Activated CD4-positive, alpha-beta memory T cell treated with anti-CD3 and anti-CD28 coated beads for 36 hours (primary cell): ENCODE measurements at regions of chr1 and their contacts with region 1.

Region 1: DNA sequence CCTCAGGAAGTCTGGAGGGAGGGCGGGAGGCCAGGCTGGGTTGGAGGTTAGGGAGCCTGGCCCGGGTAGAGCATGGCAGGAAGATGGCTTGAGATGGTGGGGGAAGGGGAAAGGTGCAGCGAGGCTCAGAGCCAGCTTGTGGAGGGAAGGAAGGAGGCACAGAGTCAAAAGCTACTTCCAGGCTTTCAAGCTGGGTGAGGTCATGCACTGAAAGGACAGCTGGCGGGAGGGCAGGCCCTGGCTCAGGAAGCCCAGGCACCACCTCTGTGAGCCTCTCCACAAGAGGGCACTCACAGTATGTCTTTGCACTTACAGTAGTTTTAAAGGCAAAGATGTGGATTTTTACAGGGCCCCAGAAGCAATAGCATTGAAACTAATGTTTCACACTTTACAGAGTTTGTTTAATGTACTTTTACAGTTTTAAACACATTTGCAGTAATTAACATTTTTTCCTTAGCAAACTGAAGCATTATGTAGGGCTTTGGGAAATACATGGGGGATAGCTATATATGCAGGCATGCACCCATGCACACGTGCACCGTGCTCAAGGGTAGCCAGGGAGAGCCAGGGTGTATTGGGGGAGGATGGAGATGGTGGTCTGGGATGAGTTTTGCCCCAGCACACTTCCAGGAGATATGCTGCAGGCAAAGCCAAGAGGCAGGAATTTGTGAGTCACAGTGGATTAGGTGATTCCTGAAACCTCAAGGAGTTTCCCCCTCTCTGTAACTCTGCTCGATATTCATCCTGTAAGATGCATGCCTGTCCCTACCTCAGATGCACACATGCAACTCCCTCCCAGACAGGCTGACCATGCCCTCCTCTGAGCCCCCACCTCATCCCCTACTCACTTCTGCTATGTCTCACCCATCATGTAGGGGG is 6.1 kb upstream of the ADAM15 start:
- DNase-seq: peak; percentile 76
- H3K4me3 Mint-ChIP-seq: no peak overlapping the region
- H3K27ac Mint-ChIP-seq: no peak overlapping the region
- H3K4me1 Mint-ChIP-seq: peaks cover 8% of the 10 kb centered on the region
- H3K27me3 Mint-ChIP-seq: no peaks in the 10 kb centered on the region

Region 2: DNA sequence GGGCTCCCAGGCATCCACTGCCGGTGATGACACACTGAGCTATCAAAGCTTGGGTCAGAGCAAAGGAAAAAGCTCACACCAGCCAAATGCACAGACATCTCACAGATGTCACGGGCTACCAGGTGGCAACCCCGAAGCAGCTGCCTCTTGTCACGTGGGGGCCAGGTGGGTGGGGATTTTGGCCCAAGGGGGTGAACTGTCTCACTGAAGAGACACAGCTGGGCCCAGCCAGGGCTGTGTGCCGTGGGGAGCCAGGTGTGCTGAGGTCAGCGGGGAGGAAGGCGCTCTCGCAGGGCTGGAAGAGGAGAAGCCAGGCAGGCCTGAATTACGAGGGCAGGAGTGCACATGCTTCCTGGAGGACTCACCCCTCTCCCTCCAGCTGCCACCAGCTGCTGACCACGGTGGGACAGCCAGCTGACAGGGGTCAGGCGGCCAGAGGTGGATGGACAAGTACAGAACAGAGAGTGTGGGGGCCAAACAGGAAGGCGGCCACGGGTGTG is 207.3 kb before region 1 on chr1:
- CTCF ChIA-PET with region 1: no interaction called
- POLR2A ChIA-PET with region 1: no interaction called
- intact Hi-C with region 1: no loop called
- DNase-seq: no peak
- H3K4me3 Mint-ChIP-seq: no peak overlapping the region
- H3K27ac Mint-ChIP-seq: no peak overlapping the region
- H3K4me1 Mint-ChIP-seq: no peaks in the 10 kb centered on the region
- H3K27me3 Mint-ChIP-seq: peaks cover 1% of the 10 kb centered on the region

Region 3: GRCh38 chr1:154936555-154937084 is 108.4 kb before region 1 on chr1 and contains the start of gene PMVK:
- CTCF ChIA-PET with region 1: no interaction called
- POLR2A ChIA-PET with region 1: no interaction called
- intact Hi-C with region 1: no loop called
- DNase-seq: peak; percentile 96
- H3K4me3 Mint-ChIP-seq: peak within 1 kb of the TSS; percentile 90
- H3K27ac Mint-ChIP-seq: peak within 1 kb of the TSS; percentile 96
- H3K4me1 Mint-ChIP-seq: peaks cover 55% of the 10 kb centered on the region
- H3K27me3 Mint-ChIP-seq: no peaks in the 10 kb centered on the region
- total RNA-seq, gene PMVK: 51.2 to 54.0 TPM

Region 4: GRCh38 chr1:155022927-155023236 is 22.2 kb before region 1 on chr1:
- CTCF ChIA-PET with region 1: interaction called, 14 read pairs
- POLR2A ChIA-PET with region 1: interaction called, 3 read pairs
- intact Hi-C with region 1: no loop called
- DNase-seq: no peak
- H3K4me3 Mint-ChIP-seq: no peak overlapping the region
- H3K27ac Mint-ChIP-seq: no peak overlapping the region
- H3K4me1 Mint-ChIP-seq: peaks cover 21% of the 10 kb centered on the region
- H3K27me3 Mint-ChIP-seq: no peaks in the 10 kb centered on the region

Region 5: DNA sequence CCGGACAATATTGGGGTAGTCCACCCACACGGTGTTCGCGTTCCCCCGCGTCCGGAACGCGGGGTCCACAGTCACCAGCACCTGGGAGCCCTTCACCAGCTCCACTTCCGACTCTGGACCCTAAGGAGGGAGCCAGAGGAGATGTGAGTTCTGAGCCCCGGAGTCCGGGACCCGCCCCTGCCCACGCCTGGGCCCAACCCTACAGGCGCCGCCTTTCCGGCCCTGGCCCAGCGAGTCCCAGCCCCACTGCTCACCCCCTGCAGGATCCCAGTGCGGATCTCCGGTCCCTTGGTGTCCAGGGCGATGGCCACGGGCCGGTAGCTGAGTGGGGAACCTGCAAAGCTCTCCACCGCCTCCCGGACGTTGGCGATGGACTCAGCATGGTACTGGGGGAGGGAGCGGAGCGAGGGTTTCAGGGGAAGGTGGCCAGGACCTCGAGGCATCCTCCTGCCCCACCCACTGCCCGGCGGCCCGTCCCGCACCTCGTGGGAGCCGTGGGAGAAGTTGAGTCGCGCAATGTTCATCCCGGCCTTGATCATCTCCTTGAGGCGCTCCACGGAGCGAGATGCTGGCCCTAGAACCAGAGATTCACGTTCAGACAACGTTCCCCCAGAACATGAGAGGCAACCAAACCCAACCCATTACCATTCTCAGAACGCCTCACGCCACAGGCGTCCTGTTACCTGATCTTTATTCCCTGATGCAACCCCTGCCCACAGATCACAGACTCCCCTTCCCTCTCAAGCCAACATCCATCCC is 250.3 kb after region 1 on chr1:
- CTCF ChIA-PET with region 1: no interaction called
- POLR2A ChIA-PET with region 1: no interaction called
- intact Hi-C with region 1: no loop called
- DNase-seq: no peak
- H3K4me3 Mint-ChIP-seq: no peak overlapping the region
- H3K27ac Mint-ChIP-seq: no peak overlapping the region
- H3K4me1 Mint-ChIP-seq: peaks cover 4% of the 10 kb centered on the region
- H3K27me3 Mint-ChIP-seq: peaks cover 34% of the 10 kb centered on the region